Activated naive CD4-positive, alpha-beta T cell treated with anti-CD3 and anti-CD28 coated beads for 36 hours (primary cell): ENCODE measurements at regions of chr19 and their contacts with region 1.

Region 1: GRCh38 chr19:19192078-19192882 is at the starts of genes BORCS8 and RFXANK:
- DNase-seq: peak; percentile 100
- H3K4me3 Mint-ChIP-seq: peak within 1 kb of the TSS; percentile 93
- H3K27ac Mint-ChIP-seq: peak within 1 kb of the TSS; percentile 96
- H3K4me1 Mint-ChIP-seq: peaks cover 49% of the 10 kb centered on the region
- H3K27me3 Mint-ChIP-seq: no peaks in the 10 kb centered on the region
- total RNA-seq, gene BORCS8: 14.0 to 16.1 TPM
- total RNA-seq, gene RFXANK: 48.4 to 49.3 TPM

Region 2: GRCh38 chr19:19033426-19034203 is 158.7 kb before region 1 on chr19 and contains the starts of genes ARMC6 and SUGP2:
- CTCF ChIA-PET with region 1: no interaction called
- intact Hi-C with region 1: loop called (anchors 1 kb)
- DNase-seq: peak; percentile 85
- H3K4me3 Mint-ChIP-seq: peak within 1 kb of the TSS; percentile 95
- H3K27ac Mint-ChIP-seq: peak within 1 kb of the TSS; percentile 86
- H3K4me1 Mint-ChIP-seq: peaks cover 37% of the 10 kb centered on the region
- H3K27me3 Mint-ChIP-seq: no peaks in the 10 kb centered on the region
- total RNA-seq, gene ARMC6: 24.2 to 24.6 TPM
- total RNA-seq, gene SUGP2: 149 to 154 TPM

Region 3: DNA sequence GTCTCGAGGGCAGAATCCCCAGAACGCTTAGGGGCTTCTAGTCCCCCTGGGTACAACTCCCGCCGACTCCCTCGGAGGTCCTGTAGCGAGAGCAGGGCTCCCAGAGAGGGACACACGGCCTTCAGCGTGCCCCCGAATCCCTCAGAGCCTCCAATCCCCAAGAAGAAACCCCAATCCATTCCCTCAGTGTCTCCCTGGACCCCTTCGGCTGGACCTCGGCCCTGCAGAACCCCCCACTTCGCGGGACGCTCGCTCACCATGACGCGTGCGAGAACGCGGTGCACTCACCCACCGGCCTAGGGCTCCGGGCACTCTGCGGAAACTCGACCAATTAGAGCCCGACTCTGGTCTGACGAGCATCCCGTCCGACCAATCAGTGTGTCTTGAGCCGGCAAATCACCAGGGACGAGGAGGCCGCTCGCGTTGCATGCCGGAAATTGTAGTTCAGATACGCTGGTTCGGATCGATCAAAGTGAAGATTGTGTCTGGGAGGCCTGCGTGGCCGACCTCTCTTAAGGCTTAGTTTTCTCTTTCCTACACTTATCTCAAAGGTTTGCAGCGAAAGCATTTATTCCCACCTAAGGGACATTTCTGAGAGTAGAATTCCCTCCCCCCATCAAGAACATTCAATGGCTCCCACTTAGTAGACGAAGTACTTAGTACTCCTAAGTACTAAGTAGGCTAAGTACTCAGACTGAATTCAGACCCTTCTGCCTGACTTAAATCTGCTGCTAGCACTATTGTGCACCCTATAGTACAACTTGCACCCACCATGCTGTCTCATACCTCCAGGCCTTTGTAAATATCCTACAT is 53.9 kb before region 1 on chr19 and contains the start of gene TMEM161A:
- CTCF ChIA-PET with region 1: interaction called, 3 read pairs
- intact Hi-C with region 1: loop called (anchors 1 kb)
- DNase-seq: peak; percentile 98
- H3K4me3 Mint-ChIP-seq: peak within 1 kb of the TSS; percentile 94
- H3K27ac Mint-ChIP-seq: peak within 1 kb of the TSS; percentile 61
- H3K4me1 Mint-ChIP-seq: peaks cover 27% of the 10 kb centered on the region
- H3K27me3 Mint-ChIP-seq: no peaks in the 10 kb centered on the region
- total RNA-seq, gene TMEM161A: 18.1 to 18.3 TPM

Region 4: GRCh38 chr19:19203012-19203856 is 11.0 kb after region 1 on chr19 and contains the start of gene NR2C2AP:
- CTCF ChIA-PET with region 1: interaction called, 8 read pairs
- intact Hi-C with region 1: loop called (anchors 1 kb)
- DNase-seq: peak; percentile 93
- H3K4me3 Mint-ChIP-seq: peak within 1 kb of the TSS; percentile 90
- H3K27ac Mint-ChIP-seq: peak within 1 kb of the TSS; percentile 89
- H3K4me1 Mint-ChIP-seq: peaks cover 33% of the 10 kb centered on the region
- H3K27me3 Mint-ChIP-seq: peaks cover 2% of the 10 kb centered on the region
- total RNA-seq, gene NR2C2AP: 32.4 to 34.2 TPM

Region 5: GRCh38 chr19:19320362-19321142 is 128.3 kb after region 1 on chr19 and contains the starts of genes MAU2 and SUGP1:
- CTCF ChIA-PET with region 1: interaction called, 4 read pairs
- intact Hi-C with region 1: loop called (anchors 1 kb)
- DNase-seq: peak; percentile 94
- H3K4me3 Mint-ChIP-seq: peak within 1 kb of the TSS; percentile 93
- H3K27ac Mint-ChIP-seq: peak within 1 kb of the TSS; percentile 99
- H3K4me1 Mint-ChIP-seq: peaks cover 47% of the 10 kb centered on the region
- H3K27me3 Mint-ChIP-seq: no peaks in the 10 kb centered on the region
- total RNA-seq, gene MAU2: 38.6 to 42.5 TPM
- total RNA-seq, gene SUGP1: 31.7 to 32.4 TPM

Region 6: DNA sequence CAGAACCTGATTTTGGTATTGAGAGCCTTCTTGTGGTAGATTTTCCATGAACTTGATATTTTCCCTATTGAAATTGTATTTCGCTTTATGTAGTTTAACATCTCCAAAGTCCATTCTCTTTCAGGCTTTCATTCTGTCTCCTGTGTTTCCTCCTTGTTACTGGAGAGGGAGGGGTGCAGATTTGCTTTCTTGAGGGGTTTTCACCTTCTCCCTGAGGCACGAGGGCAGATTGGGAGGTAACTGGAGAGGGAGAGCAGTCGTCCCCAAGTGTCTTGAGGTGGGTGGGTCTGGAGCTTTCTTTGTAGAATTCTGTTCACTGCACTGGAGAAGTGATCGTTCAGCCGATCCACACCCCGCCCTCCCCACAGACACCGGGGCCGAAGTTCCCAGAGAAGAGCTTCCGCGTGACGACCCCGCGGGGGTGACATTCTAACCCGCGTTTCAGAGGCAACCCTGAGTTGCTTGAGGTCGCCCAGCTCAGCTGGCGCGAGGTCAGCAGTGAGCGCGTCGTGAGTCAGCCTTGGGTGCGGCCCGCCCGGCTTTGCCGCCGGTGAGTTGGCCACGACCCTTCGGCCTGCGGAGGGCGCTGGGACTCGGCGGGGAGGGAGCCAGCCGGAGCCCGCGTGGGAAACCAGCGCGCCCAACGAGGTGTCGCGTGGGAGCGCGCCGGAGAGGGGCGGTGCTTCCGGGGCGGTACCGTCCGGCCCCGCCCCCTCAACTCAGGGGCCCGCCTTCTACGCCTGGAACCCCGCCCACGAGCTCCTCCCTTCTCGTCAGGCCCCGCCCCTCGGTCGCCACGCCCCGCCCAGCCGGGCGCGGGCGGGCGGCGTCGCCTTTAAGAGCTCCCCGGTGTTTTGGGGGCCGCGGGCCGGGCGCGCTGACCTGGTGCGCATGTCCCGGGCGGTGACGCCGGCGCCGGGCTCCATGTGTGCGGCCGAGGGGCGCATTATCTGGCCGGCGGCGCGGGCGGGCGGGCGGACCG is 212.9 kb after region 1 on chr19 and contains the start of gene GATAD2A:
- CTCF ChIA-PET with region 1: no interaction called
- intact Hi-C with region 1: loop called (anchors 2 kb)
- DNase-seq: peak; percentile 88
- H3K4me3 Mint-ChIP-seq: peak within 1 kb of the TSS; percentile 86
- H3K27ac Mint-ChIP-seq: peak within 1 kb of the TSS; percentile 91
- H3K4me1 Mint-ChIP-seq: peaks cover 63% of the 10 kb centered on the region
- H3K27me3 Mint-ChIP-seq: no peaks in the 10 kb centered on the region
- total RNA-seq, gene GATAD2A: 91.2 to 100 TPM